ENCODE measurements at regions of chr17 and their contacts with region 1.

Region 1: GRCh38 chr17:40317880-40318829 is 9.2 kb downstream of the RARA start:
- DNase-seq: peak; percentile 88 to 96 (median 91)
- ATAC-seq: peak; percentile 61
- H3K4me3 ChIP-seq: peak overlapping the region; percentile 91 to 95
- H3K4me3 Mint-ChIP-seq: peak overlapping the region; percentile 91
- H3K27ac ChIP-seq: peak overlapping the region; percentile 94 to 97
- H3K27ac Mint-ChIP-seq: peak overlapping the region; percentile 99
- H3K4me1 ChIP-seq: peaks cover 72% of the 10 kb centered on the region
- H3K4me1 Mint-ChIP-seq: peaks cover 87% of the 10 kb centered on the region
- H3K27me3 ChIP-seq: no peaks in the 10 kb centered on the region
- H3K27me3 Mint-ChIP-seq: no peaks in the 10 kb centered on the region
- CTCF ChIP-seq: no peak

Region 2: DNA sequence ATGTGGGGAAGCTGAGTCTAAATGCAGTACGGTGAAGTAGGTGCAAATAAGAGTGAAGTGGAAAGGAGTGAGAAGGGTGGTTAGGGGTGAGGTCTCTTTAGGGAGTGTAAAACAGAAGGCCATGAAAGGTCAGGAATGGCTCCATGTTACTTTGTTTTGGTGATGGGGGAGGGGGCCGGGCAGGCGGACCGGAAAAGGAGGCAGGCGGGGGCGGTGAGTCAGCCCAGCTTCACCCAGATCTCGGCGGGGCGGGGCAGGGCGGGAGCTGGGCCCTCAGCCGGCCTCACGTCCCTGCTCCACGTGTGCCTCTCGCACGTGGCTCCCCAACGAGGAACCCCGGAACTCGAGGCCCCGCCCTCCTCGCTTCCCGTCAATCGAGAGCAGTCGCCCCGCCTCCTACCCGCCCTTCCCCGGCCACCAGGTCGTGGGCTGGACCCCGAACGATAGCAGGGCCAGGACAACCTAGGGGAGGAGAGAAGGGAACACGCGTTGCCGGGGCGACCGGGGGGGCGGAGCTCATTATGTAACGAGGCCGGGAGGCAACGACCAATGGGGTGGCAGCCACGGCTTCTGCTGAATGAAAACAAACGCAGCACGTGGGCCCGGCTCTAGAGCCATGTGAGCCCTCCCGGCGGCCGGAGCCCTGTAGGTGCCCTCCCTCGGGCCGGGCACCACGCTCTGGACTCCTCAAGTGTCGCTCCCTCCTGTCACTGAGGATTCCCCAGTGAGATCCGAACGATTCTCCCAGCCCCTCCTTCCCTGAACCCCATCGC is 219.1 kb before region 1 on chr17:
- CTCF ChIA-PET with region 1: no interaction called
- POLR2A ChIA-PET with region 1: no interaction called
- intact Hi-C with region 1: loop called in 1 of 2 experiments (anchors 10 kb)
- DNase-seq: peak; percentile 97 to 100 (median 99)
- ATAC-seq: peak; percentile 64
- H3K4me3 ChIP-seq: peak overlapping the region; percentile 75 to 90
- H3K4me3 Mint-ChIP-seq: peak overlapping the region; percentile 94
- H3K27ac ChIP-seq: peak overlapping the region; percentile 79 to 98
- H3K27ac Mint-ChIP-seq: peak overlapping the region; percentile 95
- H3K4me1 ChIP-seq: peaks cover 80% of the 10 kb centered on the region
- H3K4me1 Mint-ChIP-seq: peaks cover 88% of the 10 kb centered on the region
- H3K27me3 ChIP-seq: no peaks in the 10 kb centered on the region
- H3K27me3 Mint-ChIP-seq: no peaks in the 10 kb centered on the region
- CTCF ChIP-seq: no peak

Region 3: DNA sequence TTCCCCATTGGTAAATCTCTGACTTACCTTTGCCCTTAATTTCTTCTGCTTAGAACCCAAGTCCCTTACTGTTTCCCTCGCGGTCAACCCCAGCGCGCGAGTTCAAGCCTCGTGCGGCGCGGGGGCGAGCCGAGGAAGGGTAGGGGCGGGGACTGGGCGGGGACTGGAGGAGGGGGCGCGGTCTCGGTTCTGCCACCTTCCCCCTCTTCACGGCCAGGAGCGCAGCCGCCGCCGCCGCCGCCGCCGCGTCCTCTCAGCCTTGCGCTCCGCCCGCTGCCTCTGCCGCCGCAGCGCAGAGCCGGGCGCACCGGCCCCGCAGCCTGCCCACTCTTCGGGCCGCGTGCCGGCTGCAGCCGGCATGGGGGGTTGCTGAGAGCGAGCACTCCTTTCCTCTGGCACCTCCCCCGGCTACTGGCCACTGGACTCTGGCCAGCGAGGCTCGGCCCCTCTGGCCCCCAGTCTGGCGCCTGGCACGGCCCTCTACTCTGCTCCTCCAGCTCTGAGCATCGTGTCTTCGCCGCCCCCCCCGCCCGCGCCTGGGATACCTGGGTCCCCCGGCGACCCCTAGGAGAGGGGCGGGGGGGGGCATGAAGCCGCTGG is 140.8 kb before region 1 on chr17 and contains the start of gene RAPGEFL1:
- CTCF ChIA-PET with region 1: no interaction called
- POLR2A ChIA-PET with region 1: no interaction called
- intact Hi-C with region 1: no loop called
- DNase-seq: peak; percentile 70 to 90 (median 81)
- ATAC-seq: peak; percentile 99
- H3K4me3 ChIP-seq: peak within 1 kb of the TSS; percentile 53 to 54
- H3K4me3 Mint-ChIP-seq: peak within 1 kb of the TSS; percentile 72
- H3K27ac ChIP-seq: no peak within 1 kb of the TSS
- H3K27ac Mint-ChIP-seq: no peak within 1 kb of the TSS
- H3K4me1 ChIP-seq: peaks cover 12% of the 10 kb centered on the region
- H3K4me1 Mint-ChIP-seq: peaks cover 11% of the 10 kb centered on the region
- H3K27me3 ChIP-seq: no peaks in the 10 kb centered on the region
- H3K27me3 Mint-ChIP-seq: no peaks in the 10 kb centered on the region
- CTCF ChIP-seq: no peak
- total RNA-seq, gene RAPGEFL1: 8.8 to 9.2 TPM

Region 4: GRCh38 chr17:40259505-40259904 is 58.6 kb before region 1 on chr17:
- CTCF ChIA-PET with region 1: no interaction called
- POLR2A ChIA-PET with region 1: no interaction called
- intact Hi-C with region 1: no loop called
- DNase-seq: no peak
- ATAC-seq: no peak
- H3K4me3 ChIP-seq: no peak overlapping the region
- H3K4me3 Mint-ChIP-seq: no peak overlapping the region
- H3K27ac ChIP-seq: no peak overlapping the region
- H3K27ac Mint-ChIP-seq: peak overlapping the region; percentile 32
- H3K4me1 ChIP-seq: no peaks in the 10 kb centered on the region
- H3K4me1 Mint-ChIP-seq: peaks cover 11% of the 10 kb centered on the region
- H3K27me3 ChIP-seq: no peaks in the 10 kb centered on the region
- H3K27me3 Mint-ChIP-seq: no peaks in the 10 kb centered on the region
- CTCF ChIP-seq: no peak

Region 5: GRCh38 chr17:40303009-40303657 is 15.0 kb before region 1 on chr17:
- CTCF ChIA-PET with region 1: interaction called, 79 read pairs
- POLR2A ChIA-PET with region 1: interaction called, 51 read pairs
- intact Hi-C with region 1: loop called in 1 of 2 experiments (anchors 1 kb)
- DNase-seq: peak in 5 of 9 experiments; percentile 41 to 83 (median 66)
- ATAC-seq: peak; percentile 69
- H3K4me3 ChIP-seq: no peak overlapping the region
- H3K4me3 Mint-ChIP-seq: no peak overlapping the region
- H3K27ac ChIP-seq: no peak overlapping the region
- H3K27ac Mint-ChIP-seq: no peak overlapping the region
- H3K4me1 ChIP-seq: peaks cover 35% of the 10 kb centered on the region
- H3K4me1 Mint-ChIP-seq: peaks cover 12% of the 10 kb centered on the region
- H3K27me3 ChIP-seq: no peaks in the 10 kb centered on the region
- H3K27me3 Mint-ChIP-seq: no peaks in the 10 kb centered on the region
- CTCF ChIP-seq: peak; percentile 85

Region 6: DNA sequence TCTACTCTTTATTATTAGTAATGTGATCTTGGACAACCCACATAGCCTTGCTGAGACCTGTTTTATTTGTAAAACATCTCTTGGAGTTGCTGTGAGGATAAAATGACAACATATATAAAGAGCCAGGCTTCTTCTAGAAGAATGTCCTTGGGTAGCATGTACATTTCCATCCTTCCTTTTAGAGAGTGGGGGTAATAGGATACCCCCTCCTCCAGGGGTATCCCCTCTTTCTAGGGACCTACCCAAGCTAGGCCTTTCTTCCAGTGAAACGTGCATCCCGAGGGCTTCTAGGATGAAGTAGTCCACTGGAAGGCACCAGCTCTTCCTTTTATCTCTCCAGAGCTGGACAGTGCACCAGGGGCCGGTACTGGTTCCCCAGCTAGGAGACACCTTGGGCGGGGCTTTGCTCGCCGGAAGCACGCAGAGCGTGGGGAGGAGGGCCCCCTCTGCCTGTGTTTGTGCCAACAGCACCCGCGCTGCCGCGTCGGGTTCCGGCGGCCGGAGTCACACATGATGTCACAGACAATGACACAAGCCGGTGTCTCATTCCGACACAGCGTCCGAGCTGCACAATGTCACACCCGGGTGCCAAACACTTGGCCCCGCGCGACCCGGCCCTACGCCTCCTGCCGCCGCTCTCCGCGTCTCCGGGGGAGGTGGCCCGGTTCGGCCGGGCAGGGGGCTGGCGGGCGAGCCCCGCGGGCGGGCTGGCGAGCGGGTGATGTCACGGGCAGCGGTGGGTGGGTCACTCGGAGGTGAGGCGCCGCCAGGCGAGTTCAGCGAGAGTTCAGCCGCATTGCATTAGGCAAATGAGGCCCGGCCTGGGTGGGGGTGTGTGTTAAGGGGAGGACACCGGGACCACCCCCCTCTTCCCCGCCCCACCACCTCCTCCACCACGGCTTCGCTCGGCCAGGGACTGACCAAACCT is 23.0 kb after region 1 on chr17:
- CTCF ChIA-PET with region 1: interaction called, 1,103 read pairs
- POLR2A ChIA-PET with region 1: interaction called, 11 read pairs
- intact Hi-C with region 1: loop called (anchors 1 kb)
- DNase-seq: peak; percentile 76 to 96 (median 88)
- ATAC-seq: peak; percentile 75
- H3K4me3 ChIP-seq: peak overlapping the region; percentile 64 to 74
- H3K4me3 Mint-ChIP-seq: peak overlapping the region; percentile 83
- H3K27ac ChIP-seq: peak overlapping the region; percentile 87 to 91
- H3K27ac Mint-ChIP-seq: peak overlapping the region; percentile 96
- H3K4me1 ChIP-seq: peaks cover 78% of the 10 kb centered on the region
- H3K4me1 Mint-ChIP-seq: peaks cover 75% of the 10 kb centered on the region
- H3K27me3 ChIP-seq: no peaks in the 10 kb centered on the region
- H3K27me3 Mint-ChIP-seq: no peaks in the 10 kb centered on the region
- CTCF ChIP-seq: peak; percentile 24

Region 7: GRCh38 chr17:40480501-40481003 is 162.4 kb after region 1 on chr17:
- CTCF ChIA-PET with region 1: interaction called, 3 read pairs
- POLR2A ChIA-PET with region 1: interaction called, 3 read pairs
- intact Hi-C with region 1: loop called in 1 of 2 experiments (anchors 5 kb)
- DNase-seq: peak; percentile 65 to 97 (median 82)
- ATAC-seq: peak; percentile 86
- H3K4me3 ChIP-seq: peak overlapping the region in 1 of 2 experiments; percentile 3
- H3K4me3 Mint-ChIP-seq: peak overlapping the region; percentile 50
- H3K27ac ChIP-seq: peak overlapping the region; percentile 65 to 93
- H3K27ac Mint-ChIP-seq: peak overlapping the region; percentile 98
- H3K4me1 ChIP-seq: peaks cover 37% of the 10 kb centered on the region
- H3K4me1 Mint-ChIP-seq: peaks cover 54% of the 10 kb centered on the region
- H3K27me3 ChIP-seq: no peaks in the 10 kb centered on the region
- H3K27me3 Mint-ChIP-seq: no peaks in the 10 kb centered on the region
- CTCF ChIP-seq: no peak

Region 8: GRCh38 chr17:40598663-40599467 is 280.7 kb after region 1 on chr17:
- CTCF ChIA-PET with region 1: no interaction called
- POLR2A ChIA-PET with region 1: no interaction called
- intact Hi-C with region 1: loop called in 1 of 2 experiments (anchors 1 kb)
- DNase-seq: peak in 8 of 9 experiments; percentile 48 to 95 (median 70)
- ATAC-seq: peak; percentile 66
- H3K4me3 ChIP-seq: peak overlapping the region; percentile 12 to 20
- H3K4me3 Mint-ChIP-seq: peak overlapping the region; percentile 69
- H3K27ac ChIP-seq: peak overlapping the region; percentile 82 to 92
- H3K27ac Mint-ChIP-seq: peak overlapping the region; percentile 100
- H3K4me1 ChIP-seq: peaks cover 98% of the 10 kb centered on the region
- H3K4me1 Mint-ChIP-seq: peaks cover 97% of the 10 kb centered on the region
- H3K27me3 ChIP-seq: no peaks in the 10 kb centered on the region
- H3K27me3 Mint-ChIP-seq: no peaks in the 10 kb centered on the region
- CTCF ChIP-seq: no peak

Region 9: DNA sequence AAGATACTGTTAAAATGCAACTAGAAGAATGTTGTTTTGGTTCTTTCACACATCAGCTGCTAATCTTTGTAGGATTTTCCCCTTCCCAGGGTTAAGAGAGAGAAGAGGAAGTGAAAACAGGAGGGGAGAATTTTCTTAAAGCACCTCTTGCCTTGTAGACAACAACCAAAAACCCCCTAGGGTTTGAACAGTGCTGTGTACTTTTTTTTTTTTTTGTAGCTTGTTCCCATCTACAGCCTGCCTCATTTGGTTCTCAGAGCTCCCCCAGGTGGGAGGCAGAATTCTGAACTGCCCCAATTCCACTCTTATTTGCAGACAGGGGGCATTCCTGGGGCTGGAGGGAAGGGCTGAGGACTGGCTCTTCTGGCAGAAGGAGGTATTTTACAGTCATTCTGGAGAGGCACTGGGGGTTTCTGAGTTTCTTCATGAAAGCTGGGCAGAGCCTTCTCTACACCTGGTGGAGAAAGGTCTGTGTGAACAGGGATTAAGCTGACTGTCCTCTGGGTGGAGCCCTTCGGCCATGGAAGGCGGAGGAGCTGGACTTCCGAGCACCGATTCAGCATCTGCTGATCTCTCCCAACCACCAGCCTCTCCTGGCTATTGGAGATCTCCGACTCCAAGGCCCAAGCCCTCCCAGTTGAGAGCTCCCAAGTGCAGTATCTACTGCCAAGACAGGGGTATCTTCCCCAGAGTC is 297.3 kb after region 1 on chr17:
- CTCF ChIA-PET with region 1: no interaction called
- POLR2A ChIA-PET with region 1: no interaction called
- intact Hi-C with region 1: loop called in 1 of 2 experiments (anchors 2 kb)
- DNase-seq: peak in 7 of 9 experiments; percentile 45 to 88 (median 71)
- ATAC-seq: peak; percentile 45
- H3K4me3 ChIP-seq: peak overlapping the region in 1 of 2 experiments; percentile 7
- H3K4me3 Mint-ChIP-seq: peak overlapping the region; percentile 44
- H3K27ac ChIP-seq: peak overlapping the region; percentile 62 to 92
- H3K27ac Mint-ChIP-seq: peak overlapping the region; percentile 97
- H3K4me1 ChIP-seq: peaks cover 76% of the 10 kb centered on the region
- H3K4me1 Mint-ChIP-seq: peaks cover 71% of the 10 kb centered on the region
- H3K27me3 ChIP-seq: no peaks in the 10 kb centered on the region
- H3K27me3 Mint-ChIP-seq: no peaks in the 10 kb centered on the region
- CTCF ChIP-seq: no peak